ENCODE measurements at regions of chr18 and their contacts with region 1.

Region 1: GRCh38 chr18:9184998-9185613 is 48.5 kb downstream of the ANKRD12 start:
- H3K4me3 Mint-ChIP-seq: peak overlapping the region; percentile 35
- H3K27ac Mint-ChIP-seq: peak overlapping the region; percentile 3
- H3K4me1 Mint-ChIP-seq: peaks cover 36% of the 10 kb centered on the region
- H3K27me3 Mint-ChIP-seq: no peaks in the 10 kb centered on the region

Region 2: GRCh38 chr18:9025091-9025838 is 159.8 kb before region 1 on chr18:
- intact Hi-C with region 1: no loop called
- H3K4me3 Mint-ChIP-seq: no peak overlapping the region
- H3K27ac Mint-ChIP-seq: no peak overlapping the region
- H3K4me1 Mint-ChIP-seq: peaks cover 8% of the 10 kb centered on the region
- H3K27me3 Mint-ChIP-seq: no peaks in the 10 kb centered on the region

Region 3: DNA sequence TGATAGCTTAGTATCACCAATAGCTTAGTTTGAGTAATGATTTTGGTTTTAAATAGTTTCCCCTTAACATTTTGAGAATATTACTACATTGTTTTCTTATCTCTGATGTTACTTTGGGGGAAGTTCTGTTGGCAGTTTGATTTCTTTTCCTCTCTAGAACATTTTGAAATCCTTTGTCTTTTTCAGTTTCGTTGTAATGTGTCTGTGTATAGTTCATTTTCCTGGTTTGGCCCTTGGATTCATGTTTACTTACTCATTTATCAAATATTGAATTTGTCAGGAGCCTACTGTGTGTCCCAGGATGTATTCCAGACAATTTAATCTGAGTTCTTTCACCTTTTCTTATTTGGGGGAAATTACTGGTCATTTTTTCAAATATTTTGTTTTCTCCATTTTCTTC is 31.9 kb before region 1 on chr18:
- intact Hi-C with region 1: loop called (anchors 5 kb)
- H3K4me3 Mint-ChIP-seq: no peak overlapping the region
- H3K27ac Mint-ChIP-seq: peak overlapping the region; percentile 63
- H3K4me1 Mint-ChIP-seq: peaks cover 66% of the 10 kb centered on the region
- H3K27me3 Mint-ChIP-seq: no peaks in the 10 kb centered on the region

Measured in dendritic cell treated with granulocyte-macrophage colony-stimulating factor and Interleukin-4, amounts not matched to agents 40 ng/mL and 50 ng/mL, for 4 days (primary cell).